ENCODE measurements at regions of chr15 and their contacts with region 1.

Region 1: GRCh38 chr15:99631255-99631654 is 65.5 kb downstream of the MEF2A start:
- DNase-seq: no peak
- ATAC-seq: peak; percentile 97
- H3K4me3 Mint-ChIP-seq: peak overlapping the region; percentile 73
- H3K27ac Mint-ChIP-seq: peak overlapping the region; percentile 92
- H3K4me1 Mint-ChIP-seq: peaks cover 77% of the 10 kb centered on the region
- H3K27me3 Mint-ChIP-seq: no peaks in the 10 kb centered on the region
- CTCF ChIP-seq: no peak

Region 2: DNA sequence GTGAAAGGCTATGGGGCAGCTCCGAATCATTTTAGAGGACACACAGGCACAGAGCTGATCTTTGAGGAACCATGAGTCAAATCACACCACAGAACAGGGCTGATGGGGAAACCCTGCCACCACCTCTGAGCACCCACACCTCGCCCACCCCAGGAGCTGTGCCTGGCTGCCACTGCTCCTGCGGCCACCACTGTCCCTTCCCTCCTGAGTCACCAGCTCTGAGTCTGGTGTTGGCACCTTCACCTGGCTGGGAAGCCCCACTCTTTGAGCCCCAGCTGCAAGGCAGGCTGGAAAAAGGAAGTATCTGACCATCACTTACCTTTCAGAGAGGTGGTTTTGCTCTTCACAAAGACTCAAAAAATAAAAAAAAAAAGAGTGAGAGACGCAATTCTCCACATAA is 129.1 kb before region 1 on chr15:
- CTCF ChIA-PET with region 1: interaction called, 3 read pairs
- POLR2A ChIA-PET with region 1: no interaction called
- intact Hi-C with region 1: loop called (anchors 2 kb)
- DNase-seq: peak; percentile 66
- ATAC-seq: peak; percentile 76
- H3K4me3 Mint-ChIP-seq: peak overlapping the region; percentile 66
- H3K27ac Mint-ChIP-seq: peak overlapping the region; percentile 92
- H3K4me1 Mint-ChIP-seq: peaks cover 76% of the 10 kb centered on the region
- H3K27me3 Mint-ChIP-seq: no peaks in the 10 kb centered on the region
- CTCF ChIP-seq: no peak

Region 3: GRCh38 chr15:99592145-99592791 is 39.0 kb before region 1 on chr15:
- CTCF ChIA-PET with region 1: no interaction called
- POLR2A ChIA-PET with region 1: no interaction called
- intact Hi-C with region 1: loop called (anchors 5 kb)
- DNase-seq: no peak
- ATAC-seq: no peak
- H3K4me3 Mint-ChIP-seq: no peak overlapping the region
- H3K27ac Mint-ChIP-seq: peak overlapping the region; percentile 25
- H3K4me1 Mint-ChIP-seq: peaks cover 71% of the 10 kb centered on the region
- H3K27me3 Mint-ChIP-seq: no peaks in the 10 kb centered on the region
- CTCF ChIP-seq: no peak

Region 4: GRCh38 chr15:99613887-99614647 is 17.2 kb before region 1 on chr15:
- CTCF ChIA-PET with region 1: no interaction called
- POLR2A ChIA-PET with region 1: interaction called, 3 read pairs
- intact Hi-C with region 1: loop called (anchors 1 kb)
- DNase-seq: no peak
- ATAC-seq: no peak
- H3K4me3 Mint-ChIP-seq: peak overlapping the region; percentile 50
- H3K27ac Mint-ChIP-seq: peak overlapping the region; percentile 72
- H3K4me1 Mint-ChIP-seq: peaks cover 74% of the 10 kb centered on the region
- H3K27me3 Mint-ChIP-seq: no peaks in the 10 kb centered on the region
- CTCF ChIP-seq: no peak

Region 5: DNA sequence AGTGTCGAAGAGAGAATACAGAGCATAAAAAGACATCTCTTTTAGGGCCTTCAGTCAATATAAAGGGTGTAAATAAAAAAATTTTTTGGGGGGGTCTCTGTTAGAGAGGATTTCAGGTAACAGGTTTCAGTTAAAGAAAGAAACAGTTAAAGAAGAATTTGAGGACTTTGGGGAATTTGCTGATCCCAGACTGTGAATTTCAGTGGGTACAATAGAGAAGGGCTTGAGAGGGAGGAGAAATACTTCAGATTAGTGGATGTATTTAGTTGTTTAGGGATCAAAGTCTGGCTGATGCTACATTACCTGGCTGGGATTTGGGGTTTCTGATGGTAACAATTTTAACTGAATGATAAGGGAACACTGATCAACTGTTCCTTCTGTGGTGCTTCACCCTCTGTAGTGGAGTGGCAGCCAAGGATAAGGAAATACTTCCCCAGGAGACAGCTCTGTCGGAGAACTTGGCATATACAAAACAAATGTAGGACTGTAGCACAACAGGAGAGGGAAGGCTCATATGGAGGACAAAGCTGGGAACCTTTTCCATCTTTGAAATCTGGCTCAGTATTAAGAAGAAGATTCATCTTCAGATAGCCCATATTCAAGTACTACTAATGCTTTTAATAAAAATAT is 13.8 kb after region 1 on chr15:
- CTCF ChIA-PET with region 1: no interaction called
- POLR2A ChIA-PET with region 1: no interaction called
- intact Hi-C with region 1: loop called (anchors 2 kb)
- DNase-seq: no peak
- ATAC-seq: no peak
- H3K4me3 Mint-ChIP-seq: no peak overlapping the region
- H3K27ac Mint-ChIP-seq: no peak overlapping the region
- H3K4me1 Mint-ChIP-seq: peaks cover 6% of the 10 kb centered on the region
- H3K27me3 Mint-ChIP-seq: no peaks in the 10 kb centered on the region
- CTCF ChIP-seq: no peak